Heart right ventricle (tissue), 16 donors: ENCODE measurements at regions of chr5 and their contacts with region 1.

Region 1: DNA sequence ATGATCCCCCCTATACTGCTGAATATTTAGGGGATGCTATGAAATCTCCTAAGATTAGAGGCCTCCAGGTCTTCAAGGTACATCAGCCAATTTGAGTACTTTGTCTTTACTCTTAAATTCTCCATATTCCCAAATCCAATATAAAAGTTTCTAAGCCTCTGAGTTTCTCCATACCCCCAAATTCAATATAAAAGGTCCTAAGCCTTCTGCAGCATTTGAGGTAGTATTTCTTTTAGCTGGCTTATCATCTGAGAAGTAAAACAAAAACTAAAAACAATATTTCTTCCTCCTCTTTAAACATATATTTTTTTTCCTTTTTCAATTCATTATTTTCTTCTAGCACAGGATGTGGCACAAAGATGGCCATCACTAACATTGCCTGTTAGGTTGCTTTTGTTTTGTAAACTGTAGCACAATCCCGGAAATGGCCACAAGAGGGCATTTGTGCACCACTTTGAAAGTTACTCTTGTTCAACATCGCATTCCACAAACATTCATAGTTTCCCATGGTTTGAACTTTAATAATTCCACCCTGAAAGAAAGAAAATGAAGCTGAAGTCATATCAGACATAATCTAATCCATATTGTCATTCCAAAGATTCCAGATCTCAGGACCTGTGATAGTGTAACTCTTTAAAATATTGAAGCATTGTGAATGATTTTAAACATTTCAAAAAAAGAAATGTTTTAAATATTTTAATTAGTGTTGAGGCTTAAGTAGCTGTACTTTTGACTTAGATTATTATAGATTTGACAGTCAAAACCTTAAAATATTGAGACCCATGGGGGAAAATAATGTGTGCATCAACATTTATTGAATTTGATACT is 21.0 kb upstream of the SCGB3A2 start:
- DNase-seq: peak in 1 of 2 donors; percentile 42
- ATAC-seq: peak in 3 of 8 donors; percentile 46 to 51 (median 46)
- H3K4me3 ChIP-seq: no peak overlapping the region
- H3K27ac ChIP-seq: no peak overlapping the region
- H3K4me1 ChIP-seq: no peaks in the 10 kb centered on the region
- H3K27me3 ChIP-seq: no peaks in the 10 kb centered on the region
- CTCF ChIP-seq: peak; percentile 67 to 90 (median 82)

Region 2: DNA sequence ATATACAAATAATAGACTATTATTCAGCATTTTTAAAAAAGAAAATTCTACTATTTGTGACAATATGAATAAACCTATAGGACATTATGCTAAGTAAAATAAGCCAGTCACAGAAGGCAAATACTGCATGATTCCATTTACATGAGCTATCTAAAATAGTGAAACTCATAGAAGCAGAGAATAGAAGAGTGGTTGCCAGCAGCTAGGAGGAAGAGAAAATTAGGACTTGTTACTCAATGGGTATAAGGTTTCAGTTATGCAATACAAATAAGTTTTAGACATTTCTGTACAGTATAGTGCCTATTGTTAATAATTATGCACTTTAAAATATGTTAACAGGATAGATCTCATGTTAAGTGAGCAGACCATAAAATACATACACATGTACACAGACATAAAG is 132.5 kb after region 1 on chr5:
- intact Hi-C with region 1: no loop called
- DNase-seq: no peak
- ATAC-seq: no peak
- H3K4me3 ChIP-seq: no peak overlapping the region
- H3K27ac ChIP-seq: no peak overlapping the region
- H3K4me1 ChIP-seq: no peaks in the 10 kb centered on the region
- H3K27me3 ChIP-seq: no peaks in the 10 kb centered on the region
- CTCF ChIP-seq: no peak

Region 3: DNA sequence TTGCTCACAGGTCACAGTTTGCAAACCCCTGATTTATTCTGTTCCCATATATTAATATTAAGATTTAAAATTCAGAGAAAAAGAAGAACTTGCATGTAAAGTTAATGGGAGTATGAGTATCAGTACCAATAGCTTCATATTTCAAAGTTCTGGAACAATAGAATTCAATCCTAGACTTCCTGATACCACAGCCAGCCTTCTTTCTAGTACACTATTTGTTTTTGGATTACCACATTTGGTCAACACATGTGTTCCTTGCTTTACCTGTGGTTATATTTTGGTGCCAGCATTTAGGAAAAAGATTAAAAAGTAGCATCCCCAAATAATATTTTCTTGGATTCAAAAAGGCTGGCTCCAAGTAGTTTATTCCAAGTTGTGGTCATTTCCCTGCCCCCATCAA is 255.7 kb after region 1 on chr5:
- intact Hi-C with region 1: loop called in 2 of 10 experiments (anchors 10 kb)
- DNase-seq: no peak
- ATAC-seq: no peak
- H3K4me3 ChIP-seq: no peak overlapping the region
- H3K27ac ChIP-seq: no peak overlapping the region
- H3K4me1 ChIP-seq: peaks cover 0 to 6% (median 0%) of the 10 kb centered on the region in 9 donors
- H3K27me3 ChIP-seq: peaks cover 0 to 3% (median 0%) of the 10 kb centered on the region in 7 donors
- CTCF ChIP-seq: no peak